IMR-90 (cell line): ENCODE measurements at regions of chr1 and their contacts with region 1.

Region 1: DNA sequence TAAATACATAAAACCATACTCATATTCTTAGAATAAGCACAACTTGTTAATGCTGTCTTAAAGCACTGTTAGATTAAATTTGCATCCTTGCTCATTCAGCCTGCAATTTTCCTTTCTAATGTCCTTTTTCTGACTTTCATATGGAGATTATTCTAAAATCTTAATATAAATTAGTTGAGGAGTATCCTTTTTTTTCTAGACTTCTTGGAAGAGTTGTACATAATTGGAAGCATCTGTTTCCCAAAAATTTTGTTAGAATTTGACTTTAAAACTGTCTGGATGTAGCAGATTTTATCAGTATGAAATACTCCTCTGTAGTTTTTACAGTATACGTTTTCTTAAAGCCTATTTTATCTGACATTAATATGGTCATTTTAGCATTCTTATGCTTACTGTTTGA is 9.7 kb downstream of the KIFAP3 start:
- DNase-seq: no peak
- ATAC-seq: no peak
- H3K4me3 ChIP-seq: no peak overlapping the region
- H3K27ac ChIP-seq: no peak overlapping the region
- H3K4me1 ChIP-seq: 0 out of 2 replicates have a peak, but pooled peaks cover 2% of the 10 kb centered on the region
- H3K27me3 ChIP-seq: no peaks in the 10 kb centered on the region
- CTCF ChIP-seq: no peak
- POLR2A ChIP-seq: no peak
- RAD21 ChIP-seq: no peak

Region 2: DNA sequence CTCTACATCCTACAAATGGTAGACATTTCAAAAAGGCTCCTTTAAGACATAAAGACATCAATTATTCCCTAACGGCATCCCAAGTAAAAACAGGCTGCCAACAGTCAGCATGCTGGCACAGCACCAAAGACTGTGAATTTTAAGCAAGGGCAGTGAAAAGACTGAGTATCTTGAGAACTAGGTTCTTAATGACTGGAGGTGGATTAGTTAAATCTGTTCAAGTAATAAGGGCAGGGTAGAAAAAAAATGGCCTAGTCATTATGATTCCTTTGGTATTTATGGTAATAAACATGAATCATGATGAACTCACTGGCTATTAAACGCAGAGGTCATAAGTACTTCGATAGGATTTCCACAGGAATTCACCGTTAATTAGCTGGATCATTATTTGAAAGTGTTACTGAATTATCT is 65.5 kb before region 1 on chr1:
- CTCF ChIA-PET with region 1: no interaction called
- POLR2A ChIA-PET with region 1: interaction called, 13 read pairs
- dilution Hi-C with region 1: no loop called
- in situ Hi-C with region 1: no loop called
- intact Hi-C with region 1: no loop called
- DNase-seq: peak; percentile 84
- ATAC-seq: peak; percentile 85
- H3K4me3 ChIP-seq: no peak overlapping the region
- H3K27ac ChIP-seq: 0 out of 2 replicates have a peak overlapping the region, but pooled peaks have one; percentile 20
- H3K4me1 ChIP-seq: peaks cover 2% of the 10 kb centered on the region; the same call in 1 of the 2 replicates
- H3K27me3 ChIP-seq: no peaks in the 10 kb centered on the region
- CTCF ChIP-seq: no peak
- POLR2A ChIP-seq: no peak
- RAD21 ChIP-seq: no peak